BJ (cell line): ENCODE measurements at regions of chr14 and their contacts with region 1.

Region 1: GRCh38 chr14:105537369-105538164 is 11.2 kb downstream of the TMEM121 start:
- DNase-seq: no peak
- H3K4me3 ChIP-seq: no peak overlapping the region
- H3K27me3 ChIP-seq: no peaks in the 10 kb centered on the region
- CTCF ChIP-seq: peak; percentile 98

Region 2: DNA sequence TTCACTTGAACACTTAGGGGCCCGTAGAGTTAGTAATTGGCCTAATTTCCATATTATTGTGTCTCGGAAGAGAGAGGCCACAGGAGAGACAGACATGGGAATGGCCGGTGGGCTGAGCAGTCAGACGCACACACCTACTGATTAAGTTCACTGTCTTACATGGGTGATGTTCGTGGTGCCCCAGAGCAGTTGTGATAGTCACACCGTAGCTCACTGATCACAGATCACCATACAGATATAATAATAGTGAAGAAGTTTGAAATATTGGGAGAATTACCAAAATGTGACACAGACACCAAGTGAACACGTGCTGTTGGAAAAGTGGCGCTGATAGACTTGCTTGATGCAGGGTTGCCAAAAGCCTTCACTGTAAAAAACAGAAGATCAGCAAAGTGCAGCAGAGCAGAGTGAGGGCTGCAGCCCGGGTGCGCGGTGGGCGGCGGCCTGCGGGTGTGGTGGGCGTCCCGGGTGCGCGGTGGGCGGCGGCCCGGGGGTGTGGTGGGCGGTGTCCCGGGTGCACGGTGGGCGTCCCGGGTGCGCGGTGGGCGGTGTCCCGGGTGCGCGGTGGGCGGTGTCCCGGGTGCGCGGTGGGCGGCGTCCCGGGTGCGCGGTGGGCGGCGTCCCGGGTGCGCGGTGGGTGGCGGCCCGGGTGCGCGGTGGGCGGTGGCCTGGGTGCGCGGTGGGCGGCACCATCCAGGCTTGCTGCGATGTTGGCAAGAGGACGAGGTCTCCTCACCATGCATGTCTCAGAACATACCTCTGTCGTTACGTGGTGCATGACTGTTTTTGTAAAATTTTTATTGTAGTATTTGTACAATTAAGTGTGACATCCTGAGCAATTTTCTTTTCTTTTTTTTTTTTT is 173.5 kb before region 1 on chr14:
- CTCF ChIA-PET with region 1: no interaction called
- POLR2A ChIA-PET with region 1: no interaction called
- DNase-seq: peak; percentile 44
- H3K4me3 ChIP-seq: peak overlapping the region; percentile 31
- H3K27me3 ChIP-seq: no peaks in the 10 kb centered on the region
- CTCF ChIP-seq: no peak

Region 3: GRCh38 chr14:105549481-105549880 is 11.9 kb after region 1 on chr14:
- CTCF ChIA-PET with region 1: interaction called, 18 read pairs
- POLR2A ChIA-PET with region 1: interaction called, 5 read pairs
- DNase-seq: no peak
- H3K4me3 ChIP-seq: no peak overlapping the region
- H3K27me3 ChIP-seq: no peaks in the 10 kb centered on the region
- CTCF ChIP-seq: no peak